Mammary epithelial cell (primary cell): ENCODE measurements at regions of chr14 and their contacts with region 1.

Region 1: DNA sequence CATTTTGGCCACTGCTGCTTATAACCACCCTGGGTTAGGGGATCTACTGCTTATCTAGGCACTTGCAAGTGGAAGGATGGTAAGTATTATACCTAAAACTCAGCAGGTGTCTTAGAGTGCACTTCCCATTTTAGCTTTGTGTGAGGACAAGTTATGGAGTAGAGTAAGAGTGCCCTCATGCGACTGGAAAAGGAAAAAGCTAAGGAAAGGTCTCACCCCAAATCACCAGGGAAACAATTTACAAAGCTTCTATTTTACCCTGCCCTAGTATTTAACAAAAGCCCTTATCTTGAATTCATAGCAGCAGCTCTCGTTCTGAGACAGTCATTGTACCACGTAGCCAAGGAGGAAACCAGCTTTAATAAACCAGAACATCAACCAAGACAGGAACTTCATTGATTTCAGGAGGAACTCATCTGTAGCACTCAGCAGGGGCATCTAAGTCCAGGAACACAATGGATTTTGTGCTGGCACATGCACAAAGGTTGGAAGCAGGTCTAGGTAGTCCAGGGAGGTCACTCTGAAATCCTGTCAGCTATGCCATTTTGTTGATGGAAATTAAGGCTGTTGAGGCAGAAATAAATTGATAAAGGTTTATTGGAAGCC is 2.9 kb downstream of the RDH12 start:
- DNase-seq: peak; percentile 54
- H3K4me3 ChIP-seq: no peak overlapping the region
- H3K27ac ChIP-seq: no peak overlapping the region
- H3K4me1 ChIP-seq: peaks cover 10% of the 10 kb centered on the region
- H3K27me3 ChIP-seq: no peaks in the 10 kb centered on the region
- CTCF ChIP-seq: peak; percentile 79 to 85

Region 2: GRCh38 chr14:67166450-67166853 is 538.1 kb before region 1 on chr14:
- CTCF ChIA-PET with region 1: no interaction called
- dilution Hi-C with region 1: no loop called
- in situ Hi-C with region 1: no loop called
- intact Hi-C with region 1: loop called (anchors 10 kb)
- DNase-seq: peak; percentile 21
- H3K4me3 ChIP-seq: no peak overlapping the region
- H3K27ac ChIP-seq: no peak overlapping the region
- H3K4me1 ChIP-seq: peaks cover 8% of the 10 kb centered on the region
- H3K27me3 ChIP-seq: no peaks in the 10 kb centered on the region
- CTCF ChIP-seq: peak; percentile 83 to 92

Region 3: DNA sequence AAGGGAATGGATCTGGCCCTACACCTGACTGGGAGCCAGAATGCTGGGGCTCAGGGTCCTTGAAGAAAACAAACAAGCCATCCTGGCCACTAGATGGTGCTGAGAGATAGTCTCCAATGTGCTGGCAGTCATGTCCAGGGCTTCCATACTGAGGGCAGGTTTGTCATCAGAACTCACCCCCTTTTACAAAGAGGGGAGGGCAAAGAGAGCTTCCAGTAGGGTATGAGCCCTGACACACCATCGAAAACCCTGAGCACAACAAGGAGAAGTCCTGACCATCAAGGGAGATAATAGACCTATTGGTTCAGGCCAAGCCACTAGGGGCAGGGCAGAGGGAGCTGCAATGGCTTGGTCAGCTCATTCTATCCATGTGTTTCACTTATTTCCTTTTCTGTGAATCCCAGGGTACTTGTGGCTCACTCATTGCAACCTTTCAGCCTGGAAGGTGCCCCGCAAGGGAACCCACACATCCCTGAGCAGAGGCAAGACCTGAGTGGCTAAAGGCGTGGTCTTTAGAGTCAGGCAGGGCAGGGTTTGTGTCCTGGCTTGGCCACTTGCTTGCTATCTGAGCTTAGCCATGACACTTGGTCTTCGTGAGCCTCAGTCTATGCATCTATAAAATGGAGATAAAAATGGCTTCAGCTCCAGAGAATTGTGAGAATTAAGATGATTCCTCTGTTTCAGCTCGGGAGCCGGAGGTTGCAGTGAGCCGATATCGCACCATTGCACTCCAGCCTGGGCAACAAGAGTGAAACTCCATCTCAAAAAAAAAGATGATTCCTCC is 177.7 kb before region 1 on chr14:
- CTCF ChIA-PET with region 1: interaction called, 19 read pairs
- dilution Hi-C with region 1: no loop called
- in situ Hi-C with region 1: no loop called
- intact Hi-C with region 1: loop called (anchors 2 kb)
- DNase-seq: peak; percentile 51
- H3K4me3 ChIP-seq: no peak overlapping the region
- H3K27ac ChIP-seq: no peak overlapping the region
- H3K4me1 ChIP-seq: peaks cover 6% of the 10 kb centered on the region
- H3K27me3 ChIP-seq: no peaks in the 10 kb centered on the region
- CTCF ChIP-seq: peak; percentile 73 to 82

Region 4: DNA sequence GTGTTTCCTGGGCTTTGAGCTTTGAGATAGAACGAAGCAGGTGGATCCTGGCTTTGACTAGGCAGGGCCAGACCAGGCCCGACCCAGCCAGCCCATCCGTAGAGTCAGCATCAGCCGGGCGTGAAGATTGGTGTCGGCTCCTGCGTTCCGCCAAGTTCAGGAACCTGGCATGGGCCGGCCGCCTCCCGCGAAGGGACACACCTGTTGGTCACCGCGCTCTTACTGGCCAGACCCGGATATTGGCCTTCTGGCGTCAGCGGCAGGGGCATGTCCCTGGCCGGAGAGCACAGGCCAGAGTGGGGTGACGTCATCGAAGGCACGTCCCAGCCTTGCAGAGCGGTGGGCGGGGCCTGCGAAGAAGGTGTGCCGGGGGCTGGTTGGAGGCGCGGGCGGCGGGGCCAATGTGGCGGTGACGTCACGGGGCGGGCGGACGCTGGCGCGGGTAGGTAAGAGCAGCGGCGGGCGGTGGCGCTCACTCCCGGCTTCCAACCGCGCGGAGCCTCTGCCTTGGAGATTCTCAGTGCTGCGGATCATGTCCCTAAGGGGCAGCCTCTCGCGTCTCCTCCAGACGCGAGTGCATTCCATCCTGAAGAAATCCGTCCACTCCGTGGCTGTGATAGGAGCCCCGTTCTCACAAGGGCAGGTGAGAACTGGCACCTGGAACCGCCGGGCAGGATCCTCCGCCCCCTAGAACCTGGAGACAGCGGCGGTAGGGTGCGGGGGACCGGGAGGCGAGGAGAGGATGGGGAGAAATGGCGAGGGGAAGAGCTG is 85.0 kb before region 1 on chr14 and contains the start of gene ARG2:
- CTCF ChIA-PET with region 1: interaction called, 17 read pairs
- dilution Hi-C with region 1: no loop called
- in situ Hi-C with region 1: loop called in 1 of 2 experiments (anchors 10 kb)
- intact Hi-C with region 1: loop called (anchors 1 kb)
- DNase-seq: peak; percentile 95
- H3K4me3 ChIP-seq: peak within 1 kb of the TSS; percentile 73 to 85 (median 81)
- H3K27ac ChIP-seq: peak within 1 kb of the TSS; percentile 69
- H3K4me1 ChIP-seq: peaks cover 28% of the 10 kb centered on the region
- H3K27me3 ChIP-seq: no peaks in the 10 kb centered on the region
- CTCF ChIP-seq: peak in 1 of 2 donors; percentile 13
- total RNA-seq, gene ARG2: 5.0 to 19.1 TPM

Region 5: GRCh38 chr14:67674481-67675169 is 30.0 kb before region 1 on chr14 and contains the start of gene VTI1B:
- CTCF ChIA-PET with region 1: interaction called, 6 read pairs
- dilution Hi-C with region 1: no loop called
- in situ Hi-C with region 1: no loop called
- intact Hi-C with region 1: loop called (anchors 2 kb)
- DNase-seq: peak; percentile 73
- H3K4me3 ChIP-seq: peak within 1 kb of the TSS; percentile 75 to 95 (median 93)
- H3K27ac ChIP-seq: peak within 1 kb of the TSS; percentile 89
- H3K4me1 ChIP-seq: peaks cover 20% of the 10 kb centered on the region
- H3K27me3 ChIP-seq: no peaks in the 10 kb centered on the region
- CTCF ChIP-seq: peak in 1 of 2 donors; percentile 23
- total RNA-seq, gene VTI1B: 37.3 to 72.8 TPM

Region 6: GRCh38 chr14:67722293-67722692 is 17.7 kb after region 1 on chr14:
- CTCF ChIA-PET with region 1: no interaction called
- dilution Hi-C with region 1: no loop called
- in situ Hi-C with region 1: no loop called
- intact Hi-C with region 1: no loop called
- DNase-seq: peak; percentile 9
- H3K4me3 ChIP-seq: no peak overlapping the region
- H3K27ac ChIP-seq: no peak overlapping the region
- H3K4me1 ChIP-seq: peaks cover 8% of the 10 kb centered on the region
- H3K27me3 ChIP-seq: no peaks in the 10 kb centered on the region
- CTCF ChIP-seq: no peak